IMR-90 (cell line): ENCODE measurements at regions of chr21 and their contacts with region 1.

Region 1: DNA sequence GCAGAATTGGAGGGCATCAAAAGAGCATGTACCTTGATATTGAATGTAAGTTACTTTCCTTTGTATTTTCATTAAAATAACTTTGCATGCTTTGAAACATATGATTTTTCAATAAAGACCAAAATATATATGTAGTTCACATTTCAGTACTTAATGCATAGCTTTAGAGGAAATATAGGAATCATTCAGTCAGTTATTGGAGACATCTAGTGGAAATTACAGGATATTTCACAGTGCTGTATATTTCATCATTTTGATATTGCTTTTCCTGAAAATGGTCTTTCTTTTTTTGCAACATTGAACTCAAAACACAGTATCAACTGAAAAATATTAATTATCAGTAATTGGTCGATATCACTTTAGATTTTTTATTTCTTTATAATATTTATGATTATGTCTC is 375.8 kb downstream of the NCAM2 start:
- DNase-seq: no peak
- ATAC-seq: peak; percentile 42; the same call in 1 of the 2 replicates
- H3K4me3 ChIP-seq: no peak overlapping the region
- H3K27ac ChIP-seq: no peak overlapping the region
- H3K4me1 ChIP-seq: no peaks in the 10 kb centered on the region
- H3K27me3 ChIP-seq: no peaks in the 10 kb centered on the region
- CTCF ChIP-seq: peak; percentile 44
- POLR2A ChIP-seq: no peak
- RAD21 ChIP-seq: peak; percentile 44

Region 2: DNA sequence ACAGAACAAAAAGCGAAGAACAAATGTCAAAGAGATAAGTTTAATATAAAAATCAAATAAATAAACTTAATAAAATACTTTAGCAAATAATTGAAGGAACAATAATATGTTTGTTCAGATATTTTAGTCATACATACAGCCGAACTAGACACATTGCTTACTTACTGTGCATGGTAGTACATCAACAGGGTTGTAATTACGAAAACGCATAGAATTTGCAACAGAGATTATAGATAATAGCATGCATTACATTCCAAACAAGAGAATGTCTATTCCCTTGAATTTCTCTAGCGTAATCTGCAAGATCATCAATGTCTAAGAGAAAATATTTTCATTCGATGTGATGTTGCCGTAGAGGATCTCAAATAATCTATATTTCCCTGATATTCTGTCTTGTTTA is 16.2 kb before region 1 on chr21:
- CTCF ChIA-PET with region 1: no interaction called
- POLR2A ChIA-PET with region 1: no interaction called
- dilution Hi-C with region 1: no loop called
- in situ Hi-C with region 1: no loop called
- intact Hi-C with region 1: no loop called
- DNase-seq: no peak
- ATAC-seq: no peak
- H3K4me3 ChIP-seq: no peak overlapping the region
- H3K27ac ChIP-seq: no peak overlapping the region
- H3K4me1 ChIP-seq: no peaks in the 10 kb centered on the region
- H3K27me3 ChIP-seq: no peaks in the 10 kb centered on the region
- CTCF ChIP-seq: no peak
- POLR2A ChIP-seq: no peak
- RAD21 ChIP-seq: no peak

Region 3: DNA sequence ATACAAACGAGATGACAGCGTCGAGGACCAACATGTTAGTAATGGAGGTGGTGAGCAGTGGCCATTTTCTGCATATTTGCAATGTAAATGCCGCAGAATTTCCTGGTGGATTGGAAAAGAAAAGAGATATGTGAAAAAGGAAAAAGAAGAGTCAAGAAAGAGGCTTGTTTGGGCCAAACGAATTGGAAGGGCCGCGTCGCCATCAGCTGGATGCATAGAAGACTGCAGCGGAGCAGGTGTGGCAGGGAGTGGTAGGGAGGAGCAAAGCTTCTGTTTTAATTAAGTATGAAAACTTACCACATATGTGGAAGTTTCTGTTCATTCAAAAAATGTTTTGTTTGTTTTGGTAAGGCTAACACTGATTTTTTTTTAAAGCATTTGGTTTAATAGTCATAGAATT is 314.9 kb after region 1 on chr21:
- CTCF ChIA-PET with region 1: no interaction called
- POLR2A ChIA-PET with region 1: no interaction called
- dilution Hi-C with region 1: no loop called
- in situ Hi-C with region 1: no loop called
- intact Hi-C with region 1: loop called (anchors 5 kb)
- DNase-seq: peak; percentile 37
- ATAC-seq: peak; percentile 77
- H3K4me3 ChIP-seq: no peak overlapping the region
- H3K27ac ChIP-seq: no peak overlapping the region
- H3K4me1 ChIP-seq: no peaks in the 10 kb centered on the region
- H3K27me3 ChIP-seq: no peaks in the 10 kb centered on the region
- CTCF ChIP-seq: peak; percentile 61
- POLR2A ChIP-seq: no peak
- RAD21 ChIP-seq: peak; percentile 77